IMR-90 (cell line): ENCODE measurements at regions of chr15 and their contacts with region 1.

Region 1: DNA sequence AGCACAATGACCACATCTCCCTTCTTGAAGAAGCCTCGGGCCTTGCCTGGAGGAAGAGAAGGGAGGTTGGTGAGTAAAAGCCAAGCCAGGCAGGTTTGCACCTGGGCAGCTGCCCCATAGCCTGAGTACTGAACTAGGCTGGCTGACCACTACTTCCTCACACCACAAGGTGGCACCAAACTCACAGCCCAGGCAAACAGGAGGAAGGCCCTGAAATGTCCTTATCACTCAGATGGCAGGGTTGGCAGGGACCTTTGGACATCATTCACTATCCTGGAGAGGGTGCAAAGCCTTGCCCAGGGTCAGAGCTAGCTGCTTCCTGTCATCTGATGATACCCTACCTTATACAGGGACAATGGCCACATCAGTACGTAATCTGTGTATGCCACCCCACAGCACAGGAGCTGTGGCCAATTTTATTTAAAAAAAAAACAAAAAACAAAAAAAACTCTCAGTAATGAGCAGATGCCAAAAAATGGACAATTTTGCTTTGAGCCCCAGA is 2.2 kb upstream of the GRAMD2A start:
- DNase-seq: peak; percentile 71
- ATAC-seq: peak; percentile 40
- H3K4me3 ChIP-seq: no peak overlapping the region
- H3K27ac ChIP-seq: no peak overlapping the region
- H3K4me1 ChIP-seq: peaks cover 2% of the 10 kb centered on the region; the same call in 1 of the 2 replicates
- H3K27me3 ChIP-seq: no peaks in the 10 kb centered on the region
- CTCF ChIP-seq: peak; percentile 81
- POLR2A ChIP-seq: no peak
- RAD21 ChIP-seq: peak; percentile 86

Region 2: GRCh38 chr15:71547011-71547410 is 652.8 kb before region 1 on chr15:
- CTCF ChIA-PET with region 1: no interaction called
- POLR2A ChIA-PET with region 1: no interaction called
- dilution Hi-C with region 1: no loop called
- in situ Hi-C with region 1: no loop called
- intact Hi-C with region 1: no loop called
- DNase-seq: no peak
- ATAC-seq: peak; percentile 49
- H3K4me3 ChIP-seq: no peak overlapping the region
- H3K27ac ChIP-seq: no peak overlapping the region
- H3K4me1 ChIP-seq: peaks cover 2% of the 10 kb centered on the region; the same call in 1 of the 2 replicates
- H3K27me3 ChIP-seq: no peaks in the 10 kb centered on the region
- CTCF ChIP-seq: no peak
- POLR2A ChIP-seq: no peak
- RAD21 ChIP-seq: no peak

Region 3: GRCh38 chr15:72272213-72273002 is 72.6 kb after region 1 on chr15 and contains the start of gene PARP6:
- CTCF ChIA-PET with region 1: no interaction called
- POLR2A ChIA-PET with region 1: no interaction called
- dilution Hi-C with region 1: no loop called
- in situ Hi-C with region 1: no loop called
- intact Hi-C with region 1: loop called (anchors 5 kb)
- DNase-seq: peak; percentile 97
- ATAC-seq: peak; percentile 99
- H3K4me3 ChIP-seq: peak within 1 kb of the TSS; percentile 80
- H3K27ac ChIP-seq: peak within 1 kb of the TSS; percentile 45
- H3K4me1 ChIP-seq: no peaks in the 10 kb centered on the region
- H3K27me3 ChIP-seq: peaks cover 1% of the 10 kb centered on the region; the same call in 1 of the 2 replicates
- CTCF ChIP-seq: peak; percentile 67
- POLR2A ChIP-seq: peak; percentile 77
- RAD21 ChIP-seq: peak; percentile 1; the same call in 1 of the 2 replicates
- total RNA-seq, gene PARP6: 10.0 and 13.4 TPM in 2 replicates

Region 4: GRCh38 chr15:72285927-72286516 is 86.3 kb after region 1 on chr15:
- CTCF ChIA-PET with region 1: no interaction called
- POLR2A ChIA-PET with region 1: no interaction called
- dilution Hi-C with region 1: no loop called
- in situ Hi-C with region 1: no loop called
- intact Hi-C with region 1: loop called (anchors 1 kb)
- DNase-seq: peak; percentile 14
- ATAC-seq: peak; percentile 65
- H3K4me3 ChIP-seq: no peak overlapping the region
- H3K27ac ChIP-seq: no peak overlapping the region
- H3K4me1 ChIP-seq: no peaks in the 10 kb centered on the region
- H3K27me3 ChIP-seq: peaks cover 22% of the 10 kb centered on the region
- CTCF ChIP-seq: peak; percentile 46
- POLR2A ChIP-seq: no peak
- RAD21 ChIP-seq: peak; percentile 33